Activated naive CD4-positive, alpha-beta T cell treated with anti-CD3 and anti-CD28 coated beads, Interleukin-2, amount 10 ng/mL, durations not matched to agents 7 days and 5 days (primary cell): ENCODE measurements at regions of chr2 and their contacts with region 1.

Region 1: DNA sequence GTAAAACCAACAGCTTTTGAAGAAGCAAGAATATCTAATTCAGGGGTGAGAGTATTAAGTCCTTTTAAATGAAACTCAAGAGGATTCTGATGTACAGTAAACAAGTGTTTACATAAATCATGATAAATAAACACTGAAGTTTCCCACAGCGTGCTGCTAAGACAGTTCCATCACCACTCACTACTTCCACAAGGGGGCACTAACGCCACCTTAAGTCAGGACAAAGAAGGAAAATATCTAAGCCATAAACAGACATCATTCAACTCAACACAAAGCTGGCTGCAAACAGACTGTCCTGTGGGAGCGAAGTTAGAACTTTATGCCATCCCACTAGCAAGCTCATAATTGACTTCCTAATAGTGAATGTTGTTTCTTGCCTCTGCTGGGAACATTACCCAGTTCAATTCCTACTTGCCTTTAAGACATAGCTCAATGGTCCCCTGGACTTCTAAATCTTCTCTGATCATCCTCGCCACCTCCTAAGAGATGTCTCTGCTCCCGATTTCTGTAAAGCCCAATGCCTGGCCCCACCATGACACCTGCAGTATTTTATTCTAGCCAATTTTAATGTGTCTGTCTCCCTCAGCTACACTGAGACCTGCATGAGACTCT is 36.5 kb downstream of the MRPL44 start:
- DNase-seq: peak; percentile 74
- H3K4me3 Mint-ChIP-seq: no peak overlapping the region
- H3K27ac Mint-ChIP-seq: no peak overlapping the region
- H3K4me1 Mint-ChIP-seq: no peaks in the 10 kb centered on the region
- H3K27me3 Mint-ChIP-seq: no peaks in the 10 kb centered on the region

Region 2: DNA sequence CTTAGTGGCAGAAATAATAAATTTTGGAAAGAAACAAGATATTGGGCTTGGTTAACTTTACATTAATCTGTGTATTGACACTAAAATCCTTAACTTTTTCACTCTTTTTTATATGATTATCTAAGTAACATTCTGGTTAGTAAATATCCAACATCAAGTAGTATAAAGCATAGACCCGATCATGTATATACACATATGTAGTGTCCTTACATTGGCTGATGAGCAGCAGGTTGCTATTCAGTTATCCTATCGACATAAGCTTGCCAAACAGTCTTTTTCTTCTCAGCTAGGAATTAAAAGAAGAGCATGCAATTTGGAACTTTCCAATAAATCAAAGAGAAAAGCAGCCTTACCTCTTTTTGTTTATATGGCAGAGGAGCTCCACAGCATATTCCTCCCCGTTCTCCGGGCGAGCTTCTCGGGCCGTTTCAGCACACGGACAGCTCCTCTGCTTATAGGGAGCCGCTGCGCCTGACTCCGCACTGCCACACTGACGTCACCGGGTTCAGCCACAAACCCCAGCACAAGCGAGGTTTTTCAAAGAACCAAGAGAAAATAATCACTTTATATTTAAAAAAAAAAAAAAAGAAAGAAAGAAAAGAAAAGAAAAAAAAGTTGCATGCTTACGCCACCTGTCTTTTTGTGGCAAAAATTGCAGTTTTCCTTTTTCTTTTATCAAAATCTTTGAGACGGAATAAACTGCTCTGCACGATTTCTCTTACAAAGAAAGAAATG is 391.6 kb before region 1 on chr2 and contains the start of gene SCG2:
- CTCF ChIA-PET with region 1: no interaction called
- DNase-seq: peak; percentile 65
- H3K4me3 Mint-ChIP-seq: no peak within 1 kb of the TSS
- H3K27ac Mint-ChIP-seq: no peak within 1 kb of the TSS
- H3K4me1 Mint-ChIP-seq: no peaks in the 10 kb centered on the region
- H3K27me3 Mint-ChIP-seq: peaks cover 3% of the 10 kb centered on the region

Region 3: DNA sequence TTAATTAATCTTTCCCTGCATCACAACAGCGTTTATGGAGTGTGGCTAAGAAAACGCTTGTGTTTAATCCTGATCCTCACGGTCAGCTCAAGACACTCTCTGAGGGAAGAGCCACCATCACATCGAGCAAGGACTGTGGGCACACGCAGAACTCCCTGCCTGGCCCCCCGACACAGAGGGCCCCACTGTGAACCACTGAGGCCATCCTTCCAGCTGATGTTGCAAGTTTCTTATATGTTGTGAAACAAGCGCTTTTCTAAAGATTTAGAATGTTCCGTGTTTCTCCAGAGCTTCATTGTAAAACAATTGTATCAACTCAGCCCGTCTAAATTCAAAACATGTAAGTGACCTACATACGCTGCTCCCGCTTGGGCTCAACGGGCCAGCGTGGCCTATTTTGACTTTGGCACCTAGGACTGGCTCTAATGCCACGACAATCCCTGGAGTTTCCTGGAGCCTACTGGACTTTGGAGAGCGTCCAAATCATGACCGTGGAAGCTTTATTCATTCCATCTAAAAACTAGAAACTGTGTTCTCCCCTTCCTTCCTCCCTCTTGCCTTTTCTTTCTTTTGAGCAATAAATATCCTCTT is 10.5 kb after region 1 on chr2:
- CTCF ChIA-PET with region 1: interaction called, 39 read pairs
- DNase-seq: no peak
- H3K4me3 Mint-ChIP-seq: no peak overlapping the region
- H3K27ac Mint-ChIP-seq: no peak overlapping the region
- H3K4me1 Mint-ChIP-seq: no peaks in the 10 kb centered on the region
- H3K27me3 Mint-ChIP-seq: no peaks in the 10 kb centered on the region

Region 4: GRCh38 chr2:224036731-224037361 is 43.1 kb after region 1 on chr2:
- CTCF ChIA-PET with region 1: interaction called, 14 read pairs
- DNase-seq: no peak
- H3K4me3 Mint-ChIP-seq: peak overlapping the region; percentile 34
- H3K27ac Mint-ChIP-seq: no peak overlapping the region
- H3K4me1 Mint-ChIP-seq: peaks cover 59% of the 10 kb centered on the region
- H3K27me3 Mint-ChIP-seq: peaks cover 38% of the 10 kb centered on the region

Region 5: GRCh38 chr2:224062481-224063297 is 69.0 kb after region 1 on chr2:
- CTCF ChIA-PET with region 1: interaction called, 59 read pairs
- DNase-seq: no peak
- H3K4me3 Mint-ChIP-seq: no peak overlapping the region
- H3K27ac Mint-ChIP-seq: no peak overlapping the region
- H3K4me1 Mint-ChIP-seq: no peaks in the 10 kb centered on the region
- H3K27me3 Mint-ChIP-seq: peaks cover 3% of the 10 kb centered on the region